Posterior cingulate gyrus (tissue), 11 donors: ENCODE measurements at regions of chr5 and their contacts with region 1.

Region 1: GRCh38 chr5:26009742-26010141 is 1028.6 kb downstream of the CDH9 start:
- DNase-seq: peak in 3 of 10 donors; percentile 25 to 40 (median 27)

Region 2: GRCh38 chr5:24816206-24816605 is 1193.5 kb before region 1 on chr5:
- intact Hi-C with region 1: no loop called
- DNase-seq: no peak

Region 3: GRCh38 chr5:25979086-25979485 is 30.7 kb before region 1 on chr5:
- intact Hi-C with region 1: loop called (anchors 1 kb)
- DNase-seq: no peak